ENCODE measurements at regions of chr7 and their contacts with region 1.

Region 1: GRCh38 chr7:120987683-120988590 is 574 bp upstream of the CPED1 start:
- DNase-seq: peak; percentile 82
- CTCF ChIP-seq: peak; percentile 95

Region 2: DNA sequence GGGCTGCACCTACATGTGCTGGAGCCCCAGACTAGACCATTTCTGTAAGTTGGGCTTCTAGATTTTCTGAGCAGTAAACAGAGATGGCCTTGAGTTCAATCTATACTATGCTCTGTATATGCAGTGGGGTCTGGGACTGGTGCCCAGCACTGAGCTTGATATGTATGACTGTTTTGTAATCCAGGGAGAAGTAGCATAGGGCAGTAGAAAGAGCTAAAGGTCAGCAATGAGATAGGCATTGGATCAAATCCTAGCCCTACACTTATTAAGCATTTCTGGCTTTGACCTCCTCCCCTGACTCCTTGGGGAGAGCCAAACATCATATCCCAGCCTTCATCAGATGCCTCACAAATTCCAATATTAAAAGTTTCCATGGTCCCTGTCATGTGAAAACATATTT is 384.6 kb before region 1 on chr7:
- CTCF ChIA-PET with region 1: no interaction called
- POLR2A ChIA-PET with region 1: no interaction called
- DNase-seq: no peak
- CTCF ChIP-seq: no peak

Region 3: DNA sequence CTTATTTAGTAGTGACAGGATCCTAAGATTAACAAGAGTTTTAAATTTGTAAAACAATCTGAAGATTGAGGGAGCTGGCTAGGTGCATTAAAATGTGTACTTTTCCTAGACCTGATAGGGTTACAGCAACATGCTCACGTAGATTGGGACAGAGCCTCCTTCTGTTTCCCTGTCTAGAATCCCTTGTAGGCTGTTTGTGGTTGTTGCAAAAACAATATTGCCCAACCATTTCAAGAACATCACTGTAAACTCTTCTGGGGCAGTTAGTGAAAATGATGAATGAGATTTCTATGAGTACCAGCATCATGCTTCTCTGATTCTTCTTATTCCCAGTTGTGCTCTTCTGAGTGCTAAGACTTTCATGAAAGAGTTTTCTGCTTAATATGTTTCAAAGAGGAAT is 14.1 kb before region 1 on chr7:
- CTCF ChIA-PET with region 1: interaction called, 44 read pairs
- POLR2A ChIA-PET with region 1: no interaction called
- DNase-seq: no peak
- CTCF ChIP-seq: no peak

Region 4: DNA sequence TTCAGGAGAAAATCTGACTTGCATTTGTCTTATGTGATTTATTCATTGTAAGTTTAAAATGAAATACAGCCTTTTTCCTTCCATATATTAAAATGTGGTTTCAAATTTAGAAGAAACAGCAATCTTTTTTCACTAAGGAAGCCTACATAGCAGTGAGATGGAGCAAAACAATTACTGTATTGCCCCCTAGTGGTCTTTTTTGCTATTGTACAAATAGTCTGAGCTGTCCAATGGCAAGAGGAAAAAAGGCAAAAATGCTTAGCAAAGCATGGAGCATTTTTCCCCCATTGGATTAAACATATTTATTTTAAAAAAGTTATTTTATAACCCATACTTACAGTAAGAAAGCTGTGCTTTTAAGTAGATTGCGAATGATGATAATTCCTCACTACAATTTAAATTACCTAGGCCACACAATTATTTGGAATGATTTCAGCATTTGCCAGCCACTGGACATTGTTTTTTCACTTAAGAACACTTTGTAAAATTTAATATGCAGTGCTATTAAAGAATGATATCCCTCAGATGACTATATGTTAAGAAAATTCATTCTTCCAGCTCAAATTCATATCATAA is 120.1 kb after region 1 on chr7:
- CTCF ChIA-PET with region 1: interaction called, 16 read pairs
- POLR2A ChIA-PET with region 1: no interaction called
- DNase-seq: peak; percentile 24
- CTCF ChIP-seq: peak; percentile 72

Measured in GM10248 (cell line).